GM18951 (cell line): ENCODE measurements at regions of chr15 and their contacts with region 1.

Region 1: DNA sequence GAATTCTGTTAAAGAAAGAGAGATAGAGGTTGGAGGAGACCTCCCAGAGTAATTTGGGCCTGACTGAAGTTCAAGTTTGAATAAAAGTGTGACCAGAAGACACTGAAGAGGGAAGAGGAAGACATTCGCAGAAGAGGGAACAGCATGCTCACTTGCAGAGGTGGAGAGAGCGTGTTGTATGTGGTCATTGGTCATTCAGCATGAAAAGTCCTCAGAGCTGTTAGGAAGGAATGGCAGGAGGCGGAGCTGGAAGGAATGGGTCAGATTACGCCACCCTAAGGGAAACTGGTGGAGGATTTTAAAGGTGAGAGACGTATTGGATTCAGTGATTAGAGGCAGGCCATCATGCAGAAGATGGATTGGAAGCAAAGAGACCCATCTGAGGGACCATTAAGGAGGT is 41.6 kb downstream of the IQCH start:
- POLR2A ChIP-seq: no peak

Region 2: GRCh38 chr15:66955871-66956585 is 340.2 kb before region 1 on chr15:
- in situ Hi-C with region 1: loop called (anchors 10 kb)
- POLR2A ChIP-seq: no peak